ENCODE measurements at regions of chr10 and their contacts with region 1.

Region 1: DNA sequence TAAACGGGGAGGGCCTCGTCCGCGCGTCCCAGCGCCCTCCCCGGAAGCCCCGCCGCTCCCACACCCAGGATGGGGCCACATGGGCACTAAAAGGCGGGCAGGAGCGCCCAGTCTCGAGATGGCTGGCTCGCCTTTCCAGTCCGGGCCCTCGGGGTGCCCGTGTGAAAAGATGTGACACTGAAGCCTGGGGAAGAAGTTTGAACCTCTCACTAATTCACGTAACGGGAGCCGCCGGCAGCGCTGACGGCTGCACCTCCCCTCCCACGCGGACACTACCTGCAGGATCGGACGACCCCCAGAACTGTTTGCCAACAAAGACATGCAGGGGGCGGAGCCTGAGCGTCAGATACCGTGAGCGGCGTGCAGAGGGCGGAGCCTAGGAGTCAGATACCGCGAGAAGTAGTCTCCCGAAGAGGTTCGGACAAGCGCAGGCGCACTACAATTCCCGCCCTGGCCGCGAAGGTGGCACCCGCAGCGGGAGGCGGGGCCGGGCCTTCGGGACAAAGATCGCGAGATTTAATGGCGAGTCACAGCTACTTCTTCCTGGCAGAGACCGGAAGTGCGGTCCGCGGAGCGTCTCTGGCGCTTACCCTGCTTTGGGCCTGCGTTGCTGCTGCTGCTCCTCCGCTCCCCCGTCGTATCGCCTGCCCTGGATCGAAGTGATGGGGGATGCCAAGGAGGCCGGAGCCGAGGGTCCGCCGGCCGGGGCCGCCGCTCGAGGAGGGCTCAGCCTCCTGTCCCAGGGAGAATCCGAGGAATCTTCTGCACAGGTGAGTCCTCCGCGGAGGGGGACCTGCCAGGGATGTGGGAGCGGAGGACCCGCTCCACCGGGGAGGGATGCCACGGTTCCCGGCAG is at the start of gene EDRF1:
- DNase-seq: peak; percentile 99
- H3K4me3 ChIP-seq: peak within 1 kb of the TSS; percentile 40 to 98 (median 85)
- H3K27ac ChIP-seq: peak within 1 kb of the TSS; percentile 76 to 95 (median 91)
- H3K4me1 ChIP-seq: peaks cover 14 to 38% (median 28%) of the 10 kb centered on the region in 6 donors
- H3K27me3 ChIP-seq: no peaks in the 10 kb centered on the region
- CTCF ChIP-seq: peak in 5 of 11 experiments; percentile 29 to 67 (median 48)
- POLR2A ChIP-seq: peak in 1 of 3 donors; percentile 33
- total RNA-seq, gene EDRF1: 30.1 to 47.5 (median 36.5) TPM

Region 2: GRCh38 chr10:125822878-125823662 is 103.7 kb after region 1 on chr10 and contains the starts of genes BCCIP and UROS:
- intact Hi-C with region 1: loop called (anchors 10 kb)
- DNase-seq: peak; percentile 97
- H3K4me3 ChIP-seq: peak within 1 kb of the TSS; percentile 87 to 100 (median 98)
- H3K27ac ChIP-seq: peak within 1 kb of the TSS; percentile 79 to 96 (median 90)
- H3K4me1 ChIP-seq: peaks cover 24 to 58% (median 46%) of the 10 kb centered on the region in 6 donors
- H3K27me3 ChIP-seq: no peaks in the 10 kb centered on the region
- CTCF ChIP-seq: peak in 2 of 11 experiments; percentile 12 to 23
- POLR2A ChIP-seq: peak in 2 of 3 donors; percentile 52
- total RNA-seq, gene BCCIP: 30.2 to 44.4 (median 33.9) TPM
- total RNA-seq, gene UROS: 30.3 to 43.8 (median 39.3) TPM